Prostate gland (tissue), 2 donors: ENCODE measurements at regions of chr1 and their contacts with region 1.

Region 1: DNA sequence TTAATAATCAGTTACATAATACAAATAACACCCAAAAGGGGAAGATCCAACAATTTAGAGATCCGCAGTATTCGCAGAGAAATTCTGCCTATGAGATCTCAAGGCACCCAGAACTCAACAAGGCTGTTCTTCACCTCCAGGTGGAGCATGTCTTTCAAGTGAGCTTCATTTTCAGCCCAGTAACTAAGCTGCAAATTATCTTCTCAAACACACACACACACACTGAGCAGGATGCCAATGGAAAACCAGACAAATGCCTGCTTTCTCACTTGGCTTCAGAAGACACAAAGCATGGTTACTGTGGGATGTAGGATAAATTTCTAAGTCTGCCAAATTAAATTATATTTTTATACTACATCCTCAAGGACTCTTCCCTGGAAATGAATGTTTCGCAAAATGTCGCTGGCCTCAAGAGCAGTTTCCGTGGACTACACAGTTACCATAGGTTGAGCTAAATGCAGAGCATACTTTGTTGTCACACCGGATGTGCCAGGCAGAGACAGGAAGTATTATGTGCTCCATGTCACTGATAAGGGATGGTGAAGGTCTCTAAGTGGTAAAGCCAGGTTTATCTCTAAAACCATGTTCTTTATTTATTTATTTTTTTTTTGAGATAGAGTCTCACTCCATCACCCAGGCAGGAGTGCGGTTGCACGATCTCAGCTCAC is 30.3 kb downstream of the UBR4 start:
- DNase-seq: peak; percentile 28
- H3K4me3 ChIP-seq: no peak overlapping the region
- H3K27ac ChIP-seq: no peak overlapping the region
- H3K4me1 ChIP-seq: no peaks in the 10 kb centered on the region
- H3K27me3 ChIP-seq: no peaks in the 10 kb centered on the region
- CTCF ChIP-seq: peak in 3 of 4 experiments; percentile 30 to 62 (median 31)
- POLR2A ChIP-seq: no peak

Region 2: GRCh38 chr1:19240673-19241538 is 61.2 kb after region 1 on chr1:
- intact Hi-C with region 1: loop called (anchors 5 kb)
- DNase-seq: peak; percentile 39
- H3K4me3 ChIP-seq: no peak overlapping the region
- H3K27ac ChIP-seq: peak overlapping the region; percentile 25 to 55
- H3K4me1 ChIP-seq: no peaks in the 10 kb centered on the region
- H3K27me3 ChIP-seq: no peaks in the 10 kb centered on the region
- CTCF ChIP-seq: peak; percentile 77 to 91 (median 85)
- POLR2A ChIP-seq: no peak